Activated naive CD8-positive, alpha-beta T cell treated with anti-CD3 and anti-CD28 coated beads, Interleukin-2, amount 10 ng/mL, durations not matched to agents 7 days and 5 days (primary cell): ENCODE measurements at regions of chr4 and their contacts with region 1.

Region 1: GRCh38 chr4:75698162-75698962 is 25.2 kb upstream of the G3BP2 start:
- DNase-seq: peak; percentile 39
- ATAC-seq: peak; percentile 77
- H3K4me3 Mint-ChIP-seq: peak overlapping the region; percentile 54
- H3K27ac Mint-ChIP-seq: peak overlapping the region; percentile 83
- H3K4me1 Mint-ChIP-seq: peaks cover 35% of the 10 kb centered on the region
- H3K27me3 Mint-ChIP-seq: no peaks in the 10 kb centered on the region

Region 2: DNA sequence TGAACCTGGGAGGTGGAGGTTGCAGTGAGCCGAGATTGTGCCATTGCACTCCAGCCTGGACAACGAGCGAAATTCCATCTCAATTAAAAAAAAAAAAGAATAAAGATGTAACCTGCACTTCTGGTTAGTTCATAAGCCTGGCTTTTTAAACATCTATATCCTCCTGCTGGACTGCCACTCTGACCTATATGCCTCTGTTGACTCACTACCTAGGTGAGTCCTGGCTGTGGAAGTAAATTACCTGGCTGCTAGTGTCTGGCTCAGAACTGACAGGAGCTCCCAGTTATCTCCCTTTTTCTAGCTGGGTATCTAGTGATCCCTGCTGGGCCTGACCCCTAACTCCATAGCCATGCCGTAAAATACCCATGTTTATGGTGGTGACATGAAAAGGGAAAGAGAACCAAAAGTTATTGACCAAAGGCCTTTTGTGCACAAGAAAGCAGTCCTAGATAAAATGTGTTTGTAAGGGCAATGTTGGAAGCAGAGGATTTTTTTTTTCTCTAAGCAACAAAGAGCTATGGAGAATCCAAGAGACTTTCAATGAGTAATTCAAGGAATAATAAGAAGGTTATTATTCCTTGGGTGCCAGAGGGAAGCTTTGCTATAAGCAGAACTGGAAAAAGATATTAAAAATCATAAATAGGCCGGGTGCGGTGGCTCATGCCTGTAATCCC is 14.7 kb before region 1 on chr4:
- POLR2A ChIA-PET with region 1: interaction called, 12 read pairs
- DNase-seq: no peak
- ATAC-seq: no peak
- H3K4me3 Mint-ChIP-seq: no peak overlapping the region
- H3K27ac Mint-ChIP-seq: peak overlapping the region; percentile 60
- H3K4me1 Mint-ChIP-seq: peaks cover 35% of the 10 kb centered on the region
- H3K27me3 Mint-ChIP-seq: no peaks in the 10 kb centered on the region